Psoas muscle (tissue), 8 donors: ENCODE measurements at regions of chr15 and their contacts with region 1.

Region 1: DNA sequence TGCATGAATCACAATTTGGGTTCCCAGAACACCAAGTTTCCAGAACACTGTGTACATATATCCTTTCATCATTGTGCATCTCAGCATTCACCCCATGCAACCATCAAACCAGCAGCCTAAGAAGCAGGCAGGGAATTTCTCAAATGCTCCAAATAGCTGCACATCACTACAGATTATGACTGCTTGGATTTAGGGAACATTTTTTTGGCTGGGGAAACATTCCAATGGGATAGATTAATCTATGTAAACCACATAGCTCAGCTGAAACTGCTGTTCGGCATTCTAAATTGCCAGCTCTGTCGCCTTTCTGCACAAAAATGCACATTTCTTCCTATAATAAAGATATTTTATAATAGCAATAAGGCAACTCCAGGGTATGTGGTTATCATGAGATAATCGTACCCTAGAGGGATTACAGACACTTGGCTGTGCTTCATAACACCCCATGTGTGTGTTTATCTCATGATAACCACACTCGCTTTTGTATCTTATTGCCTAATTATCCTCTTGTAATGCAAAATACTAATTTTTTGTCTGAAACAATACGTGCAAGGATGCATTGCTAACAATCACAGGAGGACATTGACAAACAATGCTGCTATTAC is 483.7 kb upstream of the DPH6 start:
- DNase-seq: no peak
- ATAC-seq: no peak
- H3K4me3 ChIP-seq: no peak overlapping the region
- H3K27ac ChIP-seq: no peak overlapping the region
- H3K4me1 ChIP-seq: no peaks in the 10 kb centered on the region
- H3K27me3 ChIP-seq: no peaks in the 10 kb centered on the region
- CTCF ChIP-seq: no peak

Region 2: DNA sequence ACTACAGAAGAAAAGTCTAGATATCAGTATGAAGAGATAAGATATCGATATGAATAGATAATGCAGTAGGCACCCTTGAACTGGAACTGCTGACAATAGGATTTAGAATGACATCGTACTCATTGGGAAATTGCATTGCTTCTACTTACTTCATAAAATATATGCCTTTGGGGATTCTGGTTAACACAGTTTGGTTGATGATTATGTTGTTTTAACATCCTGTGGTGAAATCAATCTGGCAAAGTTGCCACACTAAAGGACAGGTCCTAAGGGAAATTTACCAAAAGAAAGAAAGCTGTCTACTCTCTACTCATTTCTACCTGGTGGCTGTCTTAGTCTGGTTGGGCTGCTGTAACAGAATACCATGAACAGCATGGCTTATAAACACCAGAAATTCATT is 66.4 kb before region 1 on chr15:
- intact Hi-C with region 1: loop called in 1 of 2 experiments (anchors 10 kb)
- DNase-seq: no peak
- ATAC-seq: no peak
- H3K4me3 ChIP-seq: no peak overlapping the region
- H3K27ac ChIP-seq: no peak overlapping the region
- H3K4me1 ChIP-seq: no peaks in the 10 kb centered on the region
- H3K27me3 ChIP-seq: no peaks in the 10 kb centered on the region
- CTCF ChIP-seq: no peak

Region 3: GRCh38 chr15:36177590-36178302 is 148.0 kb after region 1 on chr15:
- intact Hi-C with region 1: no loop called
- DNase-seq: no peak
- ATAC-seq: no peak
- H3K4me3 ChIP-seq: no peak overlapping the region
- H3K27ac ChIP-seq: no peak overlapping the region
- H3K4me1 ChIP-seq: no peaks in the 10 kb centered on the region
- H3K27me3 ChIP-seq: no peaks in the 10 kb centered on the region
- CTCF ChIP-seq: no peak